Activated CD4-positive, alpha-beta memory T cell treated with anti-CD3 and anti-CD28 coated beads for 36 hours (primary cell): ENCODE measurements at regions of chr17 and their contacts with region 1.

Region 1: GRCh38 chr17:16537130-16537458 is 31.9 kb downstream of the ZNF287 start:
- DNase-seq: no peak
- H3K4me3 Mint-ChIP-seq: no peak overlapping the region
- H3K27ac Mint-ChIP-seq: no peak overlapping the region
- H3K4me1 Mint-ChIP-seq: peaks cover 14% of the 10 kb centered on the region
- H3K27me3 Mint-ChIP-seq: peaks cover 2% of the 10 kb centered on the region

Region 2: GRCh38 chr17:16380640-16381495 is 156.2 kb before region 1 on chr17 and contains the start of gene UBB:
- CTCF ChIA-PET with region 1: no interaction called
- POLR2A ChIA-PET with region 1: interaction called, 7 read pairs
- intact Hi-C with region 1: loop called (anchors 1 kb)
- DNase-seq: peak; percentile 98
- H3K4me3 Mint-ChIP-seq: peak within 1 kb of the TSS; percentile 93
- H3K27ac Mint-ChIP-seq: peak within 1 kb of the TSS; percentile 99
- H3K4me1 Mint-ChIP-seq: peaks cover 40% of the 10 kb centered on the region
- H3K27me3 Mint-ChIP-seq: no peaks in the 10 kb centered on the region
- total RNA-seq, gene UBB: 1,695 to 1,771 TPM

Region 3: DNA sequence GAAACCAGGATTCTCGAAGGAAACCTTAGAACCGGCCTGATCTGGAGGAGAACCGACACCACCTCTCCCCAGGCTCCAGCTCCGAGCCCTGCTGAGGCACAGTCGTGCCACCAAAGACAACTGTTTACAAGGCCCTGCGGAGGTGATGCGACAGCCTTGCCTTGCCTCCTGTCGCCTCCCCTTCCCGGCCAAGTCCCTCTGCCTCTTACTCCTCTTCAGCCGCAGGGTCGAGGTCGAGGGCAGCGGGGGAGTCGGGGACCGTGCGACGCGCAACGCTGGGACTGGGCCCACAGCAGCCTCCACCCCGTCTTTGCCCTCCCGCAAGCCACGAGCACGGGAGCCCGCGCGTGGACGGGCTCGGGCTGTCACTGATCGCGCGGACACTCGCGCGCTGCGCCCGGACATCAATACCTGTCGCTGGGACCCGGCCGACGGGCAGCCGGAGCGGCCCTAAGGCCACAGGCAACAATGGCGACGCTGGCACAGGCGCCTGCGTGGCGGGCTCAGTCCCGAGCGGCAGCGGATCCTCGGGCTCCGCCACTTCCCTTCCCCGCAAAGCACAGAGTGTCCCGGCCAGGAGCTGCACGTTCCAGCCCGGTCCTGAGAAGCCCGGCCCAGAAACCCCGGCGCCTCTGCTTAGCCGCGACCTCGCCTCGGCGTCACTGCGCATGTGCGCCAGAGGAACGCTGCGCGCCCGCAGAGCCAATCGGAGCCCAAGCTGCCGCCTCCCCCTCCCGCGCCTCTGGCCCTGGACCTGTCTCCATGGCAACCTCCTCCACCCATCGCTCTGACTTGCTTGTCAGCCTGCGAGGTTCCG is 31.7 kb after region 1 on chr17 and contains the start of gene ZNF287:
- CTCF ChIA-PET with region 1: interaction called, 4 read pairs
- POLR2A ChIA-PET with region 1: interaction called, 3 read pairs
- intact Hi-C with region 1: loop called (anchors 1 kb)
- DNase-seq: peak; percentile 94
- H3K4me3 Mint-ChIP-seq: peak within 1 kb of the TSS; percentile 84
- H3K27ac Mint-ChIP-seq: peak within 1 kb of the TSS; percentile 65
- H3K4me1 Mint-ChIP-seq: peaks cover 15% of the 10 kb centered on the region
- H3K27me3 Mint-ChIP-seq: no peaks in the 10 kb centered on the region
- total RNA-seq, gene ZNF287: 11.1 to 11.5 TPM

Region 4: DNA sequence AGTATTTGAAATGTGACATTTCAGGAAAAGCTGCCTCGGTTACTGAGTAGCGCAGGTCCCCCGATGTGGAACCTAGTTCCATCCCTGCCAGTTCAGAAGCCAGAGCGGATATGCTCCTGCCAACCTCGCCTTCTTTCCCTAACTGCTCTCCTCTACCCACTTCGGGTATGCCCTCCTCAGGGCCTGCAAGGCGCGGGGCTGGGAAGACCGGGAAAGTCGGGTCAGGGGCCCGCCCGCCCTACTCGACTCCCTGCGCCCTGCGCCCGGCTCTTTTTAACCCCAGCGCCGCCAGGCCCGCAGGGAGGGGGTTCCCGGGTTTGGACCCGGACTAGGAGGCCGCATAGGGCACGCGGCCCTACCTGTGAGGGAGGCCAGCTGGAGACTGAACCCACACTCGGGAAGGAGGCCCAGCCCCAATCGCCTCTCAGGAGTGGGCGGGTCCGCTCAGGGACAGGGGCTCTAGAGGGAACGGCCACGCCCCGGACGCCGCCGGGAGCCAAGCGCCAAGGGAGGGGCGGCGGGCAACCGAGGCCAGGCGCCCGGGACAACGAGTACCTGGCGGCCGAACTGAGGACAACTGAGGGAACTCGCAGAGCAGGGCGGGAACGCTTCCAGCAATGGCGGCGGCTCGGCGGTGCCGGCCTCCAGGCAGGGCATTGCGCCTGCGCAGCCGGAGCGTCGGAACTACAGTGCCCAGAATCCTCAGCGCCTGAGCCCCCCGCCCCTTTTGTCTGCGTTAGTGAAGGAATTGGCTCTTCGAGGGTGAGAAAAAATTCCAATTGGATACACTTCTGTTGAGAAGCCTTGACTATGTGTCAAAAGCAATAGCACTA is 116.3 kb after region 1 on chr17 and contains the start of gene ZNF624:
- CTCF ChIA-PET with region 1: interaction called, 7 read pairs
- POLR2A ChIA-PET with region 1: no interaction called
- intact Hi-C with region 1: loop called (anchors 1 kb)
- DNase-seq: peak; percentile 92
- H3K4me3 Mint-ChIP-seq: peak within 1 kb of the TSS; percentile 81
- H3K27ac Mint-ChIP-seq: peak within 1 kb of the TSS; percentile 33
- H3K4me1 Mint-ChIP-seq: peaks cover 13% of the 10 kb centered on the region
- H3K27me3 Mint-ChIP-seq: peaks cover 3% of the 10 kb centered on the region
- total RNA-seq, gene ZNF624: 3.9 to 5.0 TPM

Region 5: DNA sequence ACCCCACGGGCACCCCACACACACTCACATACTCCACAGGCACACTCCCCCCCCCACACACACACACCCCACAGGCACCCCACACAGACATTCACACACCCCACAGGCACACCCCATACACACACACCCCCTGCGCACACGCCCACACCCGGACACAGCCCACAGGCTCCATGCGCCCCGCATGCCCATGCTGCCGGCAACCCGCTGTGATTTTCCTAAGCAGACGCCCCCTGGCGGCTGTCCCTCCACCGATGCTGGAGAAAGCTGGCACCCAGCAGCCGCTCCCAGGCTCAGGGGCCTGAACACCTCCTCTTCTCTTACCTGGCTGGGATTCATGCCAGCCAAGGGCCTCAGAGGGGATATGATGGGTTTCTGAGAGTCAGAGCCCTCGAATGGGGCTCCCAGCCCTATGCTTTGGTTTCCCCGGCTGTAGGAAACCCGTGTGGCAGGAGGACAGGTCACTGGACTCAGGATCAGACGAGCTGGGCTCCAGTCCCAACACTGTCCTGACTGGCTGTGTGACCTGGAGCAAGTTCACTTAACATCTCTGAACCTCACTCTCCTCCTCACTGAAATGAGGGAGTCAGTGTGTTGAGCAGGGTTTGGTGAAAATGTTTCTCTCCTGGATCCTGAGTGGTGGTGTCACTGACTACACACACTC is 454.4 kb after region 1 on chr17:
- CTCF ChIA-PET with region 1: interaction called, 4 read pairs
- POLR2A ChIA-PET with region 1: no interaction called
- intact Hi-C with region 1: loop called (anchors 2 kb)
- DNase-seq: peak; percentile 86
- H3K4me3 Mint-ChIP-seq: no peak overlapping the region
- H3K27ac Mint-ChIP-seq: no peak overlapping the region
- H3K4me1 Mint-ChIP-seq: peaks cover 35% of the 10 kb centered on the region
- H3K27me3 Mint-ChIP-seq: no peaks in the 10 kb centered on the region